CD14-positive monocyte (primary cell): ENCODE measurements at regions of chr20 and their contacts with region 1.

Region 1: GRCh38 chr20:18587665-18588573 is at the start of gene DTD1:
- DNase-seq: peak; percentile 87 to 90 (median 88)
- H3K4me3 ChIP-seq: peak within 1 kb of the TSS; percentile 75 to 94 (median 77)
- H3K4me3 Mint-ChIP-seq: peak within 1 kb of the TSS; percentile 89 to 91
- H3K27ac ChIP-seq: peak within 1 kb of the TSS; percentile 16 to 58
- H3K27ac Mint-ChIP-seq: peak within 1 kb of the TSS in 6 of 7 donors; percentile 63 to 89 (median 85)
- H3K4me1 ChIP-seq: peaks cover 13 to 14% of the 10 kb centered on the region in 2 donors
- H3K4me1 Mint-ChIP-seq: peaks cover 15% of the 10 kb centered on the region
- H3K27me3 ChIP-seq: no peaks in the 10 kb centered on the region
- H3K27me3 Mint-ChIP-seq: peaks cover 2 to 7% (median 3%) of the 10 kb centered on the region in 3 donors
- CTCF ChIP-seq: peak; percentile 72
- polyA plus RNA-seq, gene DTD1: 18.8 to 33.6 (median 26.3) TPM

Region 2: DNA sequence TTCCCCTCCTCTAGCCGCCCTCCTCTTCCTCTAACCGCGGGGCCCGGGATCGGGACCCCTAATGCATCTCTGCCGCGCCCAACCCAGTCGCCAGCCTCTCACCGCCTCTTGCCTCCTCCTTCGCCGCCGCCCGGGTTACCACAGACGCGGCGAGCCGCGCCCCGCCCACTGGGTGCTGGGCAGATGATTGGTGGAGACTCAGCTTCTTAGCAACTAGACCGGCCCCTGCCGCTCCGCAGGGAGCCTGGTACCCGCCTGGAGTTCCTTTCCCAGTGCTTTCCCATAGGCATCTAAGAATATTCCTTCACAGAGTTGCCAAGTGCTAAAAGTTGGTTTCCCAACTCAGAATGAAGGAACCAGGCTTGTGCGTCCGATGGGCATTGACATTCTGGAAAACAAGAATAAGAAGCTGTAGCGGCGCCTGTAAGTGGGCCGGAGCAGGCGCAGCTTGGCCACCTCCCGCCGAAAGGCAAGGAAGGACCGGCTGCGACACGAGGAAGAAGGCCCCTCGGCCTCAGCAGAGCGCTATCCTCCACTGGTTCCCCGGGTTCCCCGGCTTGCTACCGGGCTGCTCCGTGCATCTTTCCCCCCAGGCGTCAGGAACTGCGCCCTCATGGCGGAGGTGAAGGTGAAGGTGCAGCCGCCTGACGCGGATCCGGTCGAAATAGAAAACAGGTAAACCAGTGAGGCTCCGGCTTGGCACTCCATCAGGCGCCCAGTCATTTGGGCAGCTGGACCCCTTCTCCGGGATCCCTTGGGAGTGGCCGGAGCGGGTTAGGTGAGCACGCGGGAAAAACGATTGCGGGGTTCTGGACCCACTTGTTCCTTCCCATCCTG is 120.8 kb before region 1 on chr20 and contains the starts of genes DZANK1 and POLR3F:
- intact Hi-C with region 1: loop called (anchors 10 kb)
- DNase-seq: peak; percentile 89 to 92 (median 90)
- H3K4me3 ChIP-seq: peak within 1 kb of the TSS; percentile 45 to 100 (median 70)
- H3K4me3 Mint-ChIP-seq: peak within 1 kb of the TSS; percentile 97 to 98
- H3K27ac ChIP-seq: peak within 1 kb of the TSS; percentile 43 to 92
- H3K27ac Mint-ChIP-seq: peak within 1 kb of the TSS; percentile 93 to 99 (median 97)
- H3K4me1 ChIP-seq: peaks cover 14 to 22% of the 10 kb centered on the region in 2 donors
- H3K4me1 Mint-ChIP-seq: peaks cover 15% of the 10 kb centered on the region
- H3K27me3 ChIP-seq: no peaks in the 10 kb centered on the region
- H3K27me3 Mint-ChIP-seq: peaks cover 0 to 2% (median 0%) of the 10 kb centered on the region in 3 donors
- CTCF ChIP-seq: no peak
- polyA plus RNA-seq, gene DZANK1: 0.17 to 1.3 (median 0.69) TPM
- polyA plus RNA-seq, gene POLR3F: 4.1 to 6.7 (median 4.8) TPM

Region 3: DNA sequence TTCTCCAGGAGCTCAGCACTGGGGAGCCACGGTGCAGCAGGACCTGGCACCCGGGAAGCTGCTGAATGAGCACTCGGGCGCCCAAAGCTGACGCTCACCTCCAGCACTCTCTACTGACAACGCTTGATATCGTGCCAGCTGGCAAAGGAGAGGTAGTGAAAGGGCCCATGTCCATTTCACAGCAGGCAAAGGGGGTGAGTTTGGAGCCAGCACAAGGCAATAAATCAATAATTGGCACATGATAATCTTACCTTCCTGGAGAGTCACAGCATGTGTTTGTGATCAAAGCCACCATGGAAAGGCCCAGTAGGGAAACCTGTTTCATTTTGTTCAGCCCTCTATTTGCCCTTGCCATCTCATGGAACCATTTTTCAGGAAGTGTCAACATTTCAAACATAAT is 44.0 kb before region 1 on chr20:
- intact Hi-C with region 1: no loop called
- DNase-seq: no peak
- H3K4me3 ChIP-seq: no peak overlapping the region
- H3K4me3 Mint-ChIP-seq: no peak overlapping the region
- H3K27ac ChIP-seq: no peak overlapping the region
- H3K27ac Mint-ChIP-seq: peak overlapping the region in 1 of 7 donors; percentile 21
- H3K4me1 ChIP-seq: no peaks in the 10 kb centered on the region
- H3K4me1 Mint-ChIP-seq: no peaks in the 10 kb centered on the region
- H3K27me3 ChIP-seq: no peaks in the 10 kb centered on the region
- H3K27me3 Mint-ChIP-seq: peaks cover 0 to 2% (median 0%) of the 10 kb centered on the region in 3 donors
- CTCF ChIP-seq: no peak